ENCODE measurements at regions of chr17 and their contacts with region 1.

Region 1: GRCh38 chr17:58303971-58304725 is 23.4 kb upstream of the MPO start:
- DNase-seq: peak; percentile 93
- H3K4me3 ChIP-seq: no peak overlapping the region
- H3K27ac ChIP-seq: no peak overlapping the region
- H3K4me1 ChIP-seq: peaks cover 0 to 3% of the 10 kb centered on the region in 2 experiments; a peak in 1 of 4 replicates
- H3K27me3 ChIP-seq: peaks cover 11% of the 10 kb centered on the region; the same call in 1 of the 2 replicates
- CTCF ChIP-seq: peak; percentile 77
- EP300 ChIP-seq: no peak
- RAD21 ChIP-seq: peak; percentile 61

Region 2: GRCh38 chr17:58337600-58338453 is 33.7 kb after region 1 on chr17:
- CTCF ChIA-PET with region 1: interaction called, 10 read pairs
- POLR2A ChIA-PET with region 1: no interaction called
- DNase-seq: no peak
- H3K4me3 ChIP-seq: no peak overlapping the region
- H3K27ac ChIP-seq: no peak overlapping the region
- H3K4me1 ChIP-seq: peaks cover 0 to 34% of the 10 kb centered on the region in 2 experiments; a peak in 1 of 4 replicates
- H3K27me3 ChIP-seq: no peaks in the 10 kb centered on the region
- CTCF ChIP-seq: no peak
- EP300 ChIP-seq: no peak
- RAD21 ChIP-seq: no peak

Region 3: DNA sequence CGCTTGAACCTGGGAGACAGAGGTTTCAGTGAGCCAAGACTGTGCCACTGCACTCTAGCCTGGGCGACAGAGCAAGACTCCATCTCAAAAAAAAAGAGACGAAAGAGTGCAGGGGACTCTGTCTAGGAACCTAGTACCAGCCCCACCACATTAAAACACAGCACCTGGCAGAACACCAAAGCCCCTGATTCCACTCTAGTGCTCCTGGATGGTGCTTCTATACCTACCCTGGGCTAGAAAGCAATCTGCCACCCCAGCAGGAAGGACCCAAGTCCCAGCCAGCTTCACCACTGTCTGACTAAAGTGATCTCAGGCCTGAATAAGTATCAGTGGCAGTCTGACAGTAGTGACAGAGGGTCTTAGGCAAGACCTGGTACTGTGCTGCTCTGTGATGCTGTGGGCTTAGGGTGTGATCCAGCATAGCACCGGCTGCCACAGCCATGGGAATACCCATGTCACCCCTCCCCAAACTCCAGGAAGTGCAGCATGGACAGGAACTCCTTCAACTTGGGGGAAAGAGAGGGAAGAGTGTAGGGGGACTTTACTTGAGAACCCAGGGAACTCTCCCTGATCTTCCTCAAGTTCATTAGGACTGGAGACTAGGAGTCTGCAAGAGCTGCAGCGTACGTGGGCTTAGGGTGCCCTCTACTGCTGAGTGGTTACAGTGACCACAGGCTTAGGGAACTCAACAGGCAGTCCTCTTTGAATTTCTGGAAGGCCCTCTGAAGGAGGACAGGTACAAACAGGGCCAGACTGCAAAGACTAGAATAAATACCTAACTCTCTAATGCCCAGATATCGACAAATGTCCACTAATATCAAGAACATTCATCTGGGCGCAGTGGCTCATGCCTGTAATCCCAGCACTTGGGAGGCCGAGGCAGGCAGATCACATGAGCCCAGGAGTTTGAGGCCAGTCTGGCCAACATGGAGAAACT is 143.2 kb after region 1 on chr17:
- CTCF ChIA-PET with region 1: interaction called, 25 read pairs
- POLR2A ChIA-PET with region 1: no interaction called
- DNase-seq: peak; percentile 78
- H3K4me3 ChIP-seq: peak overlapping the region in 1 of 2 experiments; percentile 31; a peak in 1 of 4 replicates
- H3K27ac ChIP-seq: no peak overlapping the region
- H3K4me1 ChIP-seq: no peaks in the 10 kb centered on the region
- H3K27me3 ChIP-seq: no peaks in the 10 kb centered on the region; the same call in 1 of the 2 replicates
- CTCF ChIP-seq: peak; percentile 88
- EP300 ChIP-seq: no peak
- RAD21 ChIP-seq: peak; percentile 98

Measured in SK-N-SH (cell line).